ENCODE measurements at regions of chr10 and their contacts with region 1.

Region 1: GRCh38 chr10:99976886-99977665 is 32.7 kb downstream of the DNMBP start:
- DNase-seq: no peak
- ATAC-seq: no peak; the same call in 1 of the 3 replicates
- H3K4me3 ChIP-seq: no peak overlapping the region
- H3K27ac ChIP-seq: peak overlapping the region; percentile 94
- H3K4me1 ChIP-seq: peaks cover 70% of the 10 kb centered on the region
- H3K27me3 ChIP-seq: no peaks in the 10 kb centered on the region
- CTCF ChIP-seq: no peak
- EP300 ChIP-seq: no peak
- POLR2A ChIP-seq: no peak
- RAD21 ChIP-seq: no peak

Region 2: GRCh38 chr10:99057936-99058690 is 919.0 kb before region 1 on chr10:
- CTCF ChIA-PET with region 1: no interaction called
- POLR2A ChIA-PET with region 1: no interaction called
- RAD21 ChIA-PET with region 1: no interaction called
- SMC1A ChIA-PET with region 1: no interaction called
- in situ Hi-C with region 1: no loop called
- intact Hi-C with region 1: no loop called
- DNase-seq: no peak
- ATAC-seq: no peak
- H3K4me3 ChIP-seq: no peak overlapping the region
- H3K27ac ChIP-seq: no peak overlapping the region
- H3K4me1 ChIP-seq: no peaks in the 10 kb centered on the region
- H3K27me3 ChIP-seq: no peaks in the 10 kb centered on the region
- CTCF ChIP-seq: no peak
- EP300 ChIP-seq: no peak
- POLR2A ChIP-seq: no peak
- RAD21 ChIP-seq: no peak

Region 3: GRCh38 chr10:99906470-99906869 is 70.6 kb before region 1 on chr10:
- CTCF ChIA-PET with region 1: no interaction called
- POLR2A ChIA-PET with region 1: no interaction called
- RAD21 ChIA-PET with region 1: no interaction called
- SMC1A ChIA-PET with region 1: no interaction called
- in situ Hi-C with region 1: no loop called
- intact Hi-C with region 1: no loop called
- DNase-seq: no peak
- ATAC-seq: no peak
- H3K4me3 ChIP-seq: no peak overlapping the region
- H3K27ac ChIP-seq: no peak overlapping the region
- H3K4me1 ChIP-seq: no peaks in the 10 kb centered on the region
- H3K27me3 ChIP-seq: no peaks in the 10 kb centered on the region
- CTCF ChIP-seq: no peak
- EP300 ChIP-seq: no peak
- POLR2A ChIP-seq: no peak
- RAD21 ChIP-seq: no peak

Region 4: DNA sequence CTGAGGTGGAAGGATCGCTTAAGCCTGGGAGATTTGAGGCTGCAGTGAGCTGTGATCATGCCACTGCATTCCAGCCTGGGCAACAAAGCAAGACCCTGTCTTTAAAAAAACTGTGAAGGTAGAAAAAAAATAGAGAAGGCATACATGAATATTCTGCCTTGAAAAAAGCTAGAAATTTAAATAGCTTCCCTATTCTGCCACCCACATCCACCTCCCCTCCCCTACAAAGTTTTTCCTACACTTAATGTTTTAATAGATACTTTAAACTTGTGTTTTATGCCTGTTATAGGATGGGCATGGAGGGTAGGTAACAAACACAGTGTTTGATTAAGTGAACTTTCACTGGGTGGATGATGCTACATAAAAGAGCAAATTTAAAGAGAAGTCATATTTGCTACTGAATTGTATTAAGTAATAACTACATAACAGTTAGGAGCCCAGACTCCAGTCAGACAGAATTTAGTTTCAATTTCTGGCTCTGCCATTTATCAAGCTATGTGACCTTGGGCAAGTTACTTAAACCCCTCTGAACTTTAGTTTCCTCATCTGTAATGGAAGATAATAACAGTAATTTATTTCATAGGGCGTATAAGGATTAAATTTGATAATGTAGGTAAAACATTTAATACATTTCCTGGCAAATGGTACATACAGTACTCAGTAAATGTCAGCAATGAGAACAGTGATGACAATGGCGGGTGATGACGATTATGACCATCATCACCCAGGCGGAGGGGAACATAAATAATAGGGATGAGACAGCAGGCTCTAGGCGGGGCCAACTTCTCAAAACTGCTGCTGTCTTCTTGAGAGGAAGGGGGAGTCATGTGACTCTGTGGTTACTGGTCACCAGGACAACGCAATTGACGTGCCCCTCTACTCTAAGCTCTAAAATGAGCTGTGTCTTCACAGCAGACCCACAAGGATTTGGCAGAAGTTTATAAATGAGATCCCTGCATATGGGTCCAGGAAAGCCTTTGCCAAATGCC is 16.9 kb after region 1 on chr10:
- CTCF ChIA-PET with region 1: interaction called, 13 read pairs
- POLR2A ChIA-PET with region 1: interaction called, 8 read pairs
- RAD21 ChIA-PET with region 1: interaction called, 24 read pairs
- SMC1A ChIA-PET with region 1: interaction called, 531 read pairs
- in situ Hi-C with region 1: no loop called
- intact Hi-C with region 1: no loop called
- DNase-seq: peak; percentile 51
- ATAC-seq: peak; percentile 98
- H3K4me3 ChIP-seq: peak overlapping the region; percentile 4; the same call in 1 of the 2 replicates
- H3K27ac ChIP-seq: peak overlapping the region; percentile 42
- H3K4me1 ChIP-seq: peaks cover 23% of the 10 kb centered on the region
- H3K27me3 ChIP-seq: no peaks in the 10 kb centered on the region
- CTCF ChIP-seq: no peak
- EP300 ChIP-seq: no peak
- POLR2A ChIP-seq: 0 out of 2 replicates have a peak, but pooled peaks have one; percentile 24
- RAD21 ChIP-seq: no peak

Region 5: GRCh38 chr10:100020142-100020885 is 43.2 kb after region 1 on chr10:
- CTCF ChIA-PET with region 1: interaction called, 318 read pairs
- POLR2A ChIA-PET with region 1: interaction called, 7 read pairs
- RAD21 ChIA-PET with region 1: interaction called, 25 read pairs
- SMC1A ChIA-PET with region 1: interaction called, 531 read pairs
- in situ Hi-C with region 1: no loop called
- intact Hi-C with region 1: no loop called
- DNase-seq: peak; percentile 87
- ATAC-seq: peak; percentile 92
- H3K4me3 ChIP-seq: peak overlapping the region; percentile 41; the same call in 1 of the 2 replicates
- H3K27ac ChIP-seq: peak overlapping the region; percentile 94
- H3K4me1 ChIP-seq: peaks cover 29% of the 10 kb centered on the region
- H3K27me3 ChIP-seq: no peaks in the 10 kb centered on the region
- CTCF ChIP-seq: peak in 2 of 3 experiments; percentile 28 to 44; a peak in 3 of 6 replicates
- EP300 ChIP-seq: peak in 1 of 2 experiments; percentile 31; a peak in 1 of 4 replicates
- POLR2A ChIP-seq: no peak
- RAD21 ChIP-seq: peak; percentile 56

Region 6: DNA sequence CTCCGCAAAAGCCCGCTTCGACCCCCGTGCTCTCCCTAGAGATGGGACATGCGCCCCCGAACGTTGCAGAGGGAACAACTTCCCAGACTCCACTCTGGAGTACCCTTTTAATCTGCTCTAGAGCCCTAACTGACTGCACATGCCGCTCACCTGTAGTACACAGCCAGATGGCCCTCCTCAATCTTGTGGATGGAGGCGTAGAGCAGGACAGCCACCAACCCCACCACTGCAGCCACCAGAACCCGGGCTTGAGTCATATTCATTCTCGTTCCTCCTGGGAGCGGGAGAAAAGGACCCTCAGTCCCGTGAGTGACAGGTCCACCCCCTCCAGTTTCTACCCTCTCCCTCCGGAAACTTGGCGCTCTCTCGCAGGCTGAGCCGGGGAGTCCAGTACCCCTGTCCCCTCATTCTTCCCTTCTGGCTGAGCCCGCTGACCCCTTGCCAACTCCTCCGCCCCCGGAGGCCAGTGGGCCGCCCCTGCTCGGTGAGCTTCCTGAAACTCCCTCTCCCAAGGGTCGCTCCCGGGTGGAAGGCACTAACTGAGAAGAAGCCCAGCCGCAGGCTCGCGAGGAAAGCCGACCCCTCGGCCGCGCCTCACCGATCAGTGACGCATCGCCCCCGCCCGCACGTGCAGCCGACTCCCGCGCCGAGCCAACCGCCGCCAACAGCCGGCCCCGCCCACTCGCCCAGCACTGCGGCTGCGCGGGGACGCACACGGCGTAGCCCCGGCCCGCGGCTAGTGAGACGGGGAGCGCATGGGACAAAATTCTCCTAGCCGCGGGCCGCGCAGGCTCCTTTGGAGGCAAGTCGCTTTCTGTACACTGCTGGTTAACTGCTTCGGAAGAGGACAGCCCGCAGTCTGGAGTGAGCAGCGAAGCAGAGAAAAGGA is 208.5 kb after region 1 on chr10 and contains the start of gene ERLIN1:
- CTCF ChIA-PET with region 1: interaction called, 3 read pairs
- POLR2A ChIA-PET with region 1: no interaction called
- RAD21 ChIA-PET with region 1: no interaction called
- SMC1A ChIA-PET with region 1: interaction called, 3 read pairs
- in situ Hi-C with region 1: no loop called
- intact Hi-C with region 1: loop called (anchors 10 kb)
- DNase-seq: peak; percentile 61
- ATAC-seq: peak; percentile 95
- H3K4me3 ChIP-seq: peak within 1 kb of the TSS; percentile 91
- H3K27ac ChIP-seq: peak within 1 kb of the TSS; percentile 83
- H3K4me1 ChIP-seq: no peaks in the 10 kb centered on the region; the same call in 1 of the 2 replicates
- H3K27me3 ChIP-seq: no peaks in the 10 kb centered on the region
- CTCF ChIP-seq: no peak
- EP300 ChIP-seq: peak in 1 of 2 experiments; percentile 26; a peak in 1 of 4 replicates
- POLR2A ChIP-seq: peak; percentile 85
- RAD21 ChIP-seq: no peak
- polyA plus RNA-seq, gene ERLIN1: 4.9 to 5.8 TPM